A549 (cell line): ENCODE measurements at regions of chr2 and their contacts with region 1.

Region 1: DNA sequence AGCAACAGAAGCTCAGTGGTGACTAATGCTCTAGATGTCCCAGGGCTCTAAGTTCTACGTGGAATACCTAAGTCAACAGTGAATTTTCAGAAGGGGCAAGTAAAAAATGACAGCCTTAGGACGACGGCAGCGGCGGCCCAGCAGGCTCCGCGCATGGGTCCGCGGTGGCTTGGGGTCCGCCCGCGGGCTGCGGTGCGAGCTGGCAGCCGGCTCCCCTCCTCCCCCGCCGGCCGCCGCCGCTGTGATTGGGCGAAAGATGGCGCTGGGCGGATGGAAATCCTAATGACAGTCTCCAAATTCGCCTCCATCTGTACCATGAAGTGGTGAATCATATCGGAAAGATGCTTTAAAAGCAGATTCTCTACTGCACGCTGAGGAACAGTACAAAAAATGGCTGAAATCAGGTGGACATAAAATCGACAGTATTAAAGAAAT is 74.7 kb downstream of the HNRNPLL start:
- DNase-seq: peak; percentile 68 to 73
- ATAC-seq: peak; percentile 86 to 91
- H3K4me3 ChIP-seq: peak overlapping the region; percentile 45
- H3K27ac ChIP-seq: peak overlapping the region; percentile 60 to 86
- H3K4me1 ChIP-seq: peaks cover 6% of the 10 kb centered on the region; the same call in 1 of the 3 replicates
- CTCF ChIP-seq: 0 out of 3 replicates have a peak, but pooled peaks have one; percentile 23
- EP300 ChIP-seq: no peak
- POLR2A ChIP-seq: no peak
- RAD21 ChIP-seq: peak; percentile 39 to 48; a peak in 4 of 5 replicates

Region 2: DNA sequence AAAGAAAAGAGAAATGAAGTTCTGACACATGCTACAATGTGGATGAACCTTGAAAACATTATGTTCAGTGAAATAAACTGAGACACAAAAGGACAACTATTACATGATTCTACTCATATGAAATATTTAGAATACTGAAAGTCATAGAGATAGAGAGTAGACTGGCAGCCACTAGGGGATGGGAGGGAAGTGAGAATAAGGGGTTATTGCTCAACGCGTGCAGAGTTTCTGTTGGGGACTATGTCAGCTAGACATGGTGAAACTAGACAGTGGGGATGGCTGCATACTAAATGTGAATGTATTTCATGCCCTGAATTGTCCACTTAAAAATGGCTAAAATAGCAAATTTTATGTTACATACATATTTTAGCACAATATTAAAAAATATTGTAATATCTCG is 42.3 kb before region 1 on chr2:
- CTCF ChIA-PET with region 1: no interaction called
- POLR2A ChIA-PET with region 1: no interaction called
- DNase-seq: no peak
- ATAC-seq: peak in 1 of 2 experiments; percentile 65; a peak in 3 of 6 replicates
- H3K4me3 ChIP-seq: no peak overlapping the region
- H3K27ac ChIP-seq: no peak overlapping the region
- H3K4me1 ChIP-seq: no peaks in the 10 kb centered on the region
- CTCF ChIP-seq: no peak
- EP300 ChIP-seq: no peak
- POLR2A ChIP-seq: no peak
- RAD21 ChIP-seq: no peak

Region 3: DNA sequence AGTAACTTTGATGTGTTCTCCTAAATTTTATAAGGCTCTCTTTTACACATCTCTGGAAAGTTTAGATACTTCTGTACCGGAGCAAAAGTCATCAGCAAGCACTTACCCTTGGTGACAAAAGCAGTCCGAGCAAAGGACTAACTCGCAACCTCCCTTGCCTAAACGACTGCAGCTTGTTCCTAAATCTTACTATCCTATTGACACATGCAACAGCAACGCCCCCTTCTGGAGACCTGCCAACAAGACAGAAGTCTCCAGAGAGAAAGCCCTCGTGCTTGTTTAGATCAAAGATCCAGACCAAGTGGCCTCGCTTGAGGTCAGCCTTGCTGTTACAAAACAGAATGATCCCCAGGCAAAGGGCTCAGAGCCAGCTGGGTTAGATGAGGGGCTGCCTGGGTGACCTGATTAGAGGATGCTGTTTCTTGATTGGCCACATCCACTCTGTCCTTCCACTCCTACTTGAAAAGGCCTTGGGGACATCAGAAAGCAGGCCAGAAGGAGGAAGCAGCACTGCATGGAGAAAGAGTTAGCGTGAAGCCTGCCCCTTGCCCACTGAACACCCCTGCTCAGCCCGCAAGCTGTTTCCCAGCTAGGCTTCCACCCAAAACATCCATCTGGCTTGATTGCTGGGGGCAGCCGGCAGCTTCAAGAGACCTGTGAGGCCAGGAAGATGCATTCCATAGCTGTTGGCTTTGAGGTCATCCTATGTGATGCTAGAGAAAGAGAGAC is 19.6 kb before region 1 on chr2:
- CTCF ChIA-PET with region 1: interaction called, 20 read pairs
- POLR2A ChIA-PET with region 1: no interaction called
- DNase-seq: peak; percentile 61 to 83
- ATAC-seq: peak; percentile 38 to 79; a peak in 3 of 6 replicates
- H3K4me3 ChIP-seq: no peak overlapping the region
- H3K27ac ChIP-seq: peak overlapping the region; percentile 25 to 67
- H3K4me1 ChIP-seq: peaks cover 14% of the 10 kb centered on the region
- CTCF ChIP-seq: peak; percentile 57
- EP300 ChIP-seq: no peak
- POLR2A ChIP-seq: no peak
- RAD21 ChIP-seq: peak; percentile 65 to 78

Region 4: GRCh38 chr2:38514603-38515159 is 13.3 kb before region 1 on chr2:
- CTCF ChIA-PET with region 1: interaction called, 20 read pairs
- POLR2A ChIA-PET with region 1: no interaction called
- DNase-seq: no peak
- ATAC-seq: no peak
- H3K4me3 ChIP-seq: no peak overlapping the region
- H3K27ac ChIP-seq: no peak overlapping the region
- H3K4me1 ChIP-seq: peaks cover 8% of the 10 kb centered on the region
- CTCF ChIP-seq: no peak
- EP300 ChIP-seq: no peak
- POLR2A ChIP-seq: no peak
- RAD21 ChIP-seq: no peak

Region 5: GRCh38 chr2:39156107-39156506 is 628.1 kb after region 1 on chr2:
- CTCF ChIA-PET with region 1: no interaction called
- POLR2A ChIA-PET with region 1: no interaction called
- DNase-seq: no peak
- ATAC-seq: no peak
- H3K4me3 ChIP-seq: no peak overlapping the region
- H3K27ac ChIP-seq: no peak overlapping the region
- H3K4me1 ChIP-seq: no peaks in the 10 kb centered on the region
- CTCF ChIP-seq: no peak
- EP300 ChIP-seq: no peak
- POLR2A ChIP-seq: no peak
- RAD21 ChIP-seq: no peak